ENCODE measurements at regions of chr4 and their contacts with region 1.

Region 1: DNA sequence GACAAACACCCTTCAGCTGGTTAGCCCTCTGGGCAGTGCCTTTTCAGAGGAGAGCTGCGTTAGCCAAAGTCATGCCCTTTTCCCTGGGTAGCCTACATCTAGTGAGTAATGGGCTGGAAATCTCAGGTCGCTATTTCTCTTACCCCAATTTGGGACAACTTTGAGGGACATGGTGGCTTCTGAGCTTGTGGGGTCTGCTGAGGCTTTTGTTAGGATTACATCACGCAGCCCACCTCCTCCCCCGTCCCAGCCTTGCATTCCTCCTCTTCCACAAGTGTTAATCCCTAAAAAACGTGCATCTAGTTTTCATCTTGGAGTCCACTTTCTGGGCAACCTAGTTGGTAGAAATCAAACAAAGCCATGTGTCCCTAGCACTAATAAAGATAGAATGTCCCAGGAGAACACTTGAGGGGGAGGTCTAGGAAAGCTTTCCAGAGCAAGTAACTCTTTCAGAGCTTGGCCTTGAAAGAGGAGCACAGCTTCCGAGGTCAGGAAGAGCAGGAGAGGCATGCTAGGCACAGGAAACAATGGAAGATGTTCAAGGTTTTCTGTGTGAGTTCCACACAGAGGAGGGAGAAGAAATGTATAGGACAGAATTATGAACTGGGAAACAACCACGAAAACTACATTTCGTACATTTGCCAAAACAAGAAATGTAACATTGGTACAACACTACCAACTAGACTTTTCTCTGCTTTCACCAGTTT is 2.8 kb downstream of the MRFAP1 start:
- DNase-seq: no peak
- H3K4me3 ChIP-seq: no peak overlapping the region
- H3K27ac ChIP-seq: no peak overlapping the region
- H3K4me1 ChIP-seq: peaks cover 9% of the 10 kb centered on the region
- H3K27me3 ChIP-seq: no peaks in the 10 kb centered on the region
- CTCF ChIP-seq: no peak

Region 2: DNA sequence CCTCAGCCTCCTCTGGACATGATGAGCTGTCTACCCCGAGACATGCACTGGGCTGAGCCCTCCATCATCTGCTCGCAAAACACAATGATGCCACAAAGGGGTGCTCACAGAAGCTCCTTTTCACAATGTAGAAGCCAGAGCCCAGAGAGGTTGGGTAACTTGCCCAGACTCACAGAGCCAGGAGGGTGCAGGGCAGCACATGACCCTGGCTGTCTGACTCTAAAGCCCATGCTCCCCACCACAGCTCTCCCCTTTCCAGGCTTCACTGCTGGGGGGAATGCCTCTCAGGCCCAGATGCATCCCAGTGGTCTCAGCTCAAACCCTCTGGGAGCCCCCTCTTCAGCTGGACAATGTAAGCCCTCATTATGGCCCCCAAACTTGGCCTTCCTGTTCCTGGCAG is 1394.8 kb after region 1 on chr4:
- CTCF ChIA-PET with region 1: interaction called, 10 read pairs
- POLR2A ChIA-PET with region 1: no interaction called
- intact Hi-C with region 1: no loop called
- DNase-seq: no peak
- H3K4me3 ChIP-seq: no peak overlapping the region
- H3K27ac ChIP-seq: no peak overlapping the region
- H3K4me1 ChIP-seq: peaks cover 5% of the 10 kb centered on the region
- H3K27me3 ChIP-seq: no peaks in the 10 kb centered on the region
- CTCF ChIP-seq: no peak

Measured in A673 (cell line).